GM10248 (cell line): ENCODE measurements at regions of chr12 and their contacts with region 1.

Region 1: GRCh38 chr12:45170456-45171042 is 45.3 kb upstream of the ANO6 start:
- DNase-seq: peak; percentile 68
- CTCF ChIP-seq: peak; percentile 90

Region 2: DNA sequence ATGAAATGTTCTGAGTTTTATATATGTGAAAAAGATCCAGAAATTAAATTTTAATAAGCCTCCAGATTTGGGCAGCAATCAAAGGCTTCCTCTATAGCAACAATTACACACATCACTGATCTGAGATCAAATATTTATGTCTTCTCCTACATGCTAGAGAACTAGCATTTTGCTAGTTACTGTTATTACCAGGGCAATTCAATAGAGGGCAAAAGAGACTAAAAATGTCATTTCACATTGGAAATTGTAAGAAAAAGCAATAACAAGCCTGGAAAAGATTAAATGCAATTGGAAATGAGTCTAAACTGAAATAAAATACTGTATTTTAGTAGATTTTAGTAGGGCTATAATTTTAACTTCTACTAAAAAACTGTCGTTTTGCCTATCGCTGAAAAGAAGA is 12.7 kb after region 1 on chr12:
- CTCF ChIA-PET with region 1: interaction called, 14 read pairs
- POLR2A ChIA-PET with region 1: no interaction called
- DNase-seq: no peak
- CTCF ChIP-seq: peak; percentile 27

Region 3: DNA sequence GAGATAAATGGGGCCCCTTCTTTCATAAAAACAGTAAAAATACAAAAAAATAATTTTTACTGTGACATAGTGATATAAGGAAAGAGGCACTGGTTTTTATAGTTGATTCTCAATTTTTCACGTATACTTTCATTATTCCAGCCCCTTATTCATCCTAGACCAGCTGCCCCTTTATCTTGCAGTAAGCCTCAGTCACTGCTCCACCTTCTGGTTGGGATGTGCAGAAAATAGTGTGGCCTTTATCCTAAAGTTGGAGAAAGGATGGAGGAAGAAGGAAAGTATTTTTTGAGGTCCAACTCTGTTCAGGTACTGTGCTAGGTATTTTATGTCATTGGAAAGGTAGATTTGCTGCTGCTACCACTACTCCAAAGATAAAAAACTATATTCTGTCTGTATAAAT is 218.0 kb after region 1 on chr12:
- CTCF ChIA-PET with region 1: interaction called, 13 read pairs
- POLR2A ChIA-PET with region 1: no interaction called
- DNase-seq: no peak
- CTCF ChIP-seq: peak; percentile 46